MCF 10A (cell line): ENCODE measurements at regions of chrX and their contacts with region 1.

Region 1: GRCh38 chrX:18886344-18887161 is 97.4 kb downstream of the PHKA2 start:
- DNase-seq: peak; percentile 76
- H3K4me3 Mint-ChIP-seq: peak overlapping the region; percentile 85
- H3K27ac Mint-ChIP-seq: peak overlapping the region; percentile 97
- H3K4me1 Mint-ChIP-seq: peaks cover 24% of the 10 kb centered on the region
- H3K27me3 Mint-ChIP-seq: no peaks in the 10 kb centered on the region
- CTCF ChIP-seq: peak; percentile 39

Region 2: DNA sequence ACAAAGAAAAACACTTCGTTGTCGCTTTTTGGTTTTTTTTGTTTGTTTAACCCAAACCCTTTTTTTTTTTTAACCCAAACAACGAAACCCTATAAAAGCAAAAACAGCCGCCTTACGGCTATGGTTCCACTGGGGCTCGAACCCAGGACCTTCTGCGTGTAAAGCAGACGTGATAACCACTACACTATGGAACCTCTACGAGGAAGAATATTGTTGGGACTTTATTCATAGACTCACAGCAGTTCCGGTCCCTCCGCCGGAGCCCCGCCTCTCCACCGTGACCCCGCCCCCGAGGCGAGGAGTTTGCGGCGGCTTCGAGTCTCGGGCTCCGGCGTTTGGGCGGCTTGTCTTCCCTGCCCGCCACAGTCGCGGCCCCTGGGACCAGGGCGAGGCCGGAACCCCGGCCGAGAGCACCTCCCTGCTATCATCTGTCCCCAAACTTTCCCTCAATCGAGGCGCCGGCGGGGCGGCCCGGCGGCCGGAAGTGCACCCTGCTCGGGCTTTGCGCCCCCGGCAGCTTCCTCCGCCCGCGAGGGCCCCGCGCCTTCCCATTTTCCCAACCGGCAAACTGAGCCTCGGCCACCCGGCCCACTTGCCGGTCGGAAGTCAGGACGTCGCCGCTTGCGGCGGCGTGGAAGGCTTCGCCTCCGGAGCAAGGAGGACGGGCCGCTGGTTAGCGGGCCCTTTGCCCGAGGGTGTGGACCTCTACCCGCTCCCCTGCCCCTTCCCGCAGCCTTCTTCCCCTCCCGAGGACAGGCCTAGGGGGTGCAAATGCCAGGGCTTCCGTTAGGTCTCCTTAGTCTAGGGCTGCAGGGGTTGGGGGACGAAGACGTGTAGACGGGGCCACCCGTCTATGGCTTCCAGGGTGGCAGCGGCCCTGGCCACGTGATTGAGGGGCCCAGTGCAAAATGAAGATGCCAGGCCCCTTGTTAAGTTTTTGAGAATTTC is 211.5 kb before region 1 on chrX:
- CTCF ChIA-PET with region 1: no interaction called
- POLR2A ChIA-PET with region 1: no interaction called
- intact Hi-C with region 1: loop called (anchors 10 kb)
- DNase-seq: peak; percentile 71
- H3K4me3 Mint-ChIP-seq: peak overlapping the region; percentile 52
- H3K27ac Mint-ChIP-seq: peak overlapping the region; percentile 27
- H3K4me1 Mint-ChIP-seq: no peaks in the 10 kb centered on the region
- H3K27me3 Mint-ChIP-seq: no peaks in the 10 kb centered on the region
- CTCF ChIP-seq: no peak

Region 3: DNA sequence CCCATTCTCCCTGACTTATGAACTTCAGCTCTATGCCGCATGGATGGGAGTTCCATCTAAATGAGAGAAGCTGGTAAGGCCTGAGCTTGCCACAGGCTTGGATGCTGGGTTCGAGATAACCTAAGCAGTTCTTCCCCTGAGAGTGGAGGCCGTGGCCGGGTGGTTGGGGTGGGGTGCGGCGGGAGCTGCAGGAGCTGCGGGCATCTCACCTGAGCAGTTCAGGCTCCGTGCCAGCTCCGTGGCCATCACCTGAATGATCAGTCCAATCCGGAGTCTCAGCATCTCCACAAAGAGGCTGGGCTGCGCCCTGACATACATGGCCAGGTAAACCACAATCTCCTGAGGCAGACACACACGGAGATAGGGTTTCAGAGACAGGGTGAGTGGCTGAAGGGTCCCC is 19.7 kb after region 1 on chrX:
- CTCF ChIA-PET with region 1: no interaction called
- POLR2A ChIA-PET with region 1: no interaction called
- intact Hi-C with region 1: no loop called
- DNase-seq: no peak
- H3K4me3 Mint-ChIP-seq: no peak overlapping the region
- H3K27ac Mint-ChIP-seq: no peak overlapping the region
- H3K4me1 Mint-ChIP-seq: no peaks in the 10 kb centered on the region
- H3K27me3 Mint-ChIP-seq: no peaks in the 10 kb centered on the region
- CTCF ChIP-seq: no peak